Natural killer cell (primary cell): ENCODE measurements at regions of chr20 and their contacts with region 1.

Region 1: GRCh38 chr20:56468316-56469082 is at the start of gene RTF2:
- DNase-seq: peak; percentile 96 to 97
- ATAC-seq: peak; percentile 93 to 97 (median 93)
- H3K4me3 ChIP-seq: peak within 1 kb of the TSS; percentile 95
- H3K4me3 Mint-ChIP-seq: peak within 1 kb of the TSS; percentile 99
- H3K27ac ChIP-seq: peak within 1 kb of the TSS; percentile 97
- H3K27ac Mint-ChIP-seq: peak within 1 kb of the TSS; percentile 98 to 100
- H3K4me1 ChIP-seq: peaks cover 28% of the 10 kb centered on the region
- H3K4me1 Mint-ChIP-seq: peaks cover 37 to 45% of the 10 kb centered on the region in 2 donors
- H3K27me3 ChIP-seq: no peaks in the 10 kb centered on the region
- H3K27me3 Mint-ChIP-seq: no peaks in the 10 kb centered on the region
- CTCF ChIP-seq: no peak
- total RNA-seq, gene RTF2: 81.5 to 89.1 (median 83.4) TPM

Region 2: DNA sequence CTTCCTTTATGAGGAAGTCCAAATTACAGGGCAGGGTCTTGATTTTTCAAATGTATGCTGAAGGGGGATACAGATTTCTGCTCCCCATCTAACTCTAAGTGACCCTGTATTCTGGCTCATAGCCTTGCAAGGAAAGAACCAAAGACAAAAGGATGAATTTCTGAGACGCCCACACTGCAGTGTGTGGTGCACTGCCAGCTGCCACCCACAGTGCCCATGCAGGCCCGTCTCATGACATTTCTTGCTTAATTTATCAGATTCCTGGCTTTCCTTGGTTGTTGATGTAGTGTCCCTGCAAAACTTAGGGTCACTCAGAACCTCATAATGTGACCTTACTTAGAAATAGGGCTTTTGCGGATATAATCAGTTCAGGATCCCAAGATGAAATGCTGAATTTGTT is 531.2 kb before region 1 on chr20:
- intact Hi-C with region 1: no loop called
- DNase-seq: no peak
- ATAC-seq: no peak
- H3K4me3 ChIP-seq: no peak overlapping the region
- H3K4me3 Mint-ChIP-seq: no peak overlapping the region
- H3K27ac ChIP-seq: no peak overlapping the region
- H3K27ac Mint-ChIP-seq: no peak overlapping the region
- H3K4me1 ChIP-seq: no peaks in the 10 kb centered on the region
- H3K4me1 Mint-ChIP-seq: no peaks in the 10 kb centered on the region
- H3K27me3 ChIP-seq: no peaks in the 10 kb centered on the region
- H3K27me3 Mint-ChIP-seq: no peaks in the 10 kb centered on the region
- CTCF ChIP-seq: no peak

Region 3: DNA sequence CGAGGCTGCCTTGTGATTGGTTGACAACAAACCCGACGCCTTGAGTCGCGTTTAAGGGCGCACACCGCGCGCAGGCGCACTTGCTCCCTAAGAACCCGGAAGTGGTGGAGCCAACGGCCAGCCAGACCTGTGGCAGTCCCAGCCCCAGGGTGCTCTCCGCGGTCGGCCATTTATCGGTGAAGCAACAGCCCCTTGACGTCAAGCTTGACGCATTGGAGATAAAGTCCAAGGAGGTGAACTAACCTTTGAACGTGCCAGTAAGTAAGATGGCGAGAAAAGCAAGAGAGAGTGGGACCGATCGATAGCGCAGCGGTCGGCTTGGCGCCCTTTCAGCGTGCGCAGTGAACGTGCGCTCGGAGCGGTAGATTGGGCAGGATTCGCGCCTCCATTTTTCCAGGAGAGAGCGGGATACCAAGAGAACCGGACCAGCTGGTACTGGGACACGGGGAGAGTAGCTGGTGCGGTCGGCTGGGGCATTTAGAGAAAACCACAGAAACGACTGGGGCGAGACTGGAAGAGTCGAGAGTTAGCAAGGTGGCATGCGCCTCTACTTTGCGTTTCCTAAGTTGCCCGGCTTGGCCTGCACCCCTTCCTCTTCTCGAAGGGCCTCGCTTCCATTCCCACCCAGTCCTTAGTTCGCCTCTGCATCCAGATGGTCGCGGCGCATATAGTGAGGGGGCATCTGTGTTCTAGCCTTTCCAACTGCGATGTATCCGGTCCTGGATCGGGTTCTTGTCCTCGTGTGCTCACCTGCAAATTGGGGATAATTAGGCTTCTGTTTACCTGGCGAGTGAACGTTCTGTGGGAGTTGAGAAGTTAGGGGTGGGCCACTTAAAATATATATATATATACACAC is 76.0 kb before region 1 on chr20 and contains the start of gene CSTF1:
- intact Hi-C with region 1: loop called (anchors 1 kb)
- DNase-seq: peak; percentile 99 to 100
- ATAC-seq: peak; percentile 88 to 93 (median 89)
- H3K4me3 ChIP-seq: peak within 1 kb of the TSS; percentile 91
- H3K4me3 Mint-ChIP-seq: no peak within 1 kb of the TSS
- H3K27ac ChIP-seq: peak within 1 kb of the TSS; percentile 74
- H3K27ac Mint-ChIP-seq: no peak within 1 kb of the TSS
- H3K4me1 ChIP-seq: peaks cover 21% of the 10 kb centered on the region
- H3K4me1 Mint-ChIP-seq: peaks cover 12 to 23% of the 10 kb centered on the region in 2 donors
- H3K27me3 ChIP-seq: no peaks in the 10 kb centered on the region
- H3K27me3 Mint-ChIP-seq: no peaks in the 10 kb centered on the region
- CTCF ChIP-seq: no peak
- total RNA-seq, gene CSTF1: 15.8 to 24.3 (median 18.5) TPM

Region 4: GRCh38 chr20:56400090-56400542 is 68.4 kb before region 1 on chr20:
- intact Hi-C with region 1: loop called (anchors 1 kb)
- DNase-seq: peak in 1 of 2 donors; percentile 90
- ATAC-seq: peak; percentile 82 to 97 (median 83)
- H3K4me3 ChIP-seq: no peak overlapping the region
- H3K4me3 Mint-ChIP-seq: no peak overlapping the region
- H3K27ac ChIP-seq: no peak overlapping the region
- H3K27ac Mint-ChIP-seq: peak overlapping the region; percentile 80
- H3K4me1 ChIP-seq: no peaks in the 10 kb centered on the region
- H3K4me1 Mint-ChIP-seq: peaks cover 8 to 13% of the 10 kb centered on the region in 2 donors
- H3K27me3 ChIP-seq: no peaks in the 10 kb centered on the region
- H3K27me3 Mint-ChIP-seq: no peaks in the 10 kb centered on the region
- CTCF ChIP-seq: peak; percentile 96

Region 5: DNA sequence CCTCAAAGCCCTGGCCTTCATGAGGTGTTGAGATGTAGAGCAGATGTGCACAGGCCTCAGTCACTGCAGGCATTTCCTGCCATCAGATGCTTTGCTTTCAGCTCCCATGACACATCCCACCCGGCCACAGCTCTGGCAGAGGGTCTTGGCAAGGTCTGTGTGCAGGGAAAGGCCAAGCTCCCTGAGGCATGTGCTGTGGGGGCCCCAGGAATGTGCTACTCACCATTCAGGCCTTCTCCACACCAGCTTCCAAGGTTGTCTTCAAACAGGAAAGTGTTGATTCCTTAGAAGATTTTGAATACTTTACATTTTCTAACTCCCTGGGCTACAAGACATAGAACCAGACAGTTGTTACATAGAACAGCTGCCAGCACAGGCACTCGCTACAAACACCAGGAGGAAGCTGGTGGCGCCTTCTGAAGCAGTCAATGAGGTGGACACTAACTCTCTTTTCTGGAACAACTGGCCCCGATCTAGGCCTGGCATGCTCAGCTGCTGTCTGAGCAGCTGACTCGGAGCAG is 28.7 kb before region 1 on chr20:
- intact Hi-C with region 1: loop called (anchors 1 kb)
- DNase-seq: peak in 1 of 2 donors; percentile 38
- ATAC-seq: peak in 1 of 3 donors; percentile 29
- H3K4me3 ChIP-seq: no peak overlapping the region
- H3K4me3 Mint-ChIP-seq: peak overlapping the region; percentile 72
- H3K27ac ChIP-seq: peak overlapping the region; percentile 38
- H3K27ac Mint-ChIP-seq: peak overlapping the region; percentile 77 to 81
- H3K4me1 ChIP-seq: peaks cover 48% of the 10 kb centered on the region
- H3K4me1 Mint-ChIP-seq: peaks cover 42% of the 10 kb centered on the region in 2 donors
- H3K27me3 ChIP-seq: no peaks in the 10 kb centered on the region
- H3K27me3 Mint-ChIP-seq: no peaks in the 10 kb centered on the region
- CTCF ChIP-seq: no peak

Region 6: GRCh38 chr20:56483944-56484343 is 15.4 kb after region 1 on chr20:
- intact Hi-C with region 1: no loop called
- DNase-seq: peak in 1 of 2 donors; percentile 49
- ATAC-seq: peak in 1 of 3 donors; percentile 35
- H3K4me3 ChIP-seq: no peak overlapping the region
- H3K4me3 Mint-ChIP-seq: no peak overlapping the region
- H3K27ac ChIP-seq: no peak overlapping the region
- H3K27ac Mint-ChIP-seq: peak overlapping the region; percentile 53 to 81
- H3K4me1 ChIP-seq: peaks cover 5% of the 10 kb centered on the region
- H3K4me1 Mint-ChIP-seq: peaks cover 22 to 57% of the 10 kb centered on the region in 2 donors
- H3K27me3 ChIP-seq: no peaks in the 10 kb centered on the region
- H3K27me3 Mint-ChIP-seq: no peaks in the 10 kb centered on the region
- CTCF ChIP-seq: no peak